ENCODE measurements at regions of chr1 and their contacts with region 1.

Region 1: GRCh38 chr1:151459331-151460046 is at the start of gene POGZ:
- DNase-seq: peak; percentile 92
- H3K4me3 ChIP-seq: peak within 1 kb of the TSS; percentile 70 to 91
- H3K27ac ChIP-seq: peak within 1 kb of the TSS; percentile 95 to 99
- H3K4me1 ChIP-seq: peaks cover 2% of the 10 kb centered on the region
- H3K27me3 ChIP-seq: no peaks in the 10 kb centered on the region
- CTCF ChIP-seq: no peak
- POLR2A ChIP-seq: no peak
- total RNA-seq, gene POGZ: 34.5 to 126 TPM

Region 2: GRCh38 chr1:151472856-151473731 is 13.6 kb after region 1 on chr1:
- intact Hi-C with region 1: loop called (anchors 2 kb)
- DNase-seq: peak; percentile 13
- H3K4me3 ChIP-seq: peak overlapping the region; percentile 49 to 62
- H3K27ac ChIP-seq: peak overlapping the region; percentile 58 to 74
- H3K4me1 ChIP-seq: no peaks in the 10 kb centered on the region
- H3K27me3 ChIP-seq: no peaks in the 10 kb centered on the region
- CTCF ChIP-seq: no peak
- POLR2A ChIP-seq: no peak

Region 3: DNA sequence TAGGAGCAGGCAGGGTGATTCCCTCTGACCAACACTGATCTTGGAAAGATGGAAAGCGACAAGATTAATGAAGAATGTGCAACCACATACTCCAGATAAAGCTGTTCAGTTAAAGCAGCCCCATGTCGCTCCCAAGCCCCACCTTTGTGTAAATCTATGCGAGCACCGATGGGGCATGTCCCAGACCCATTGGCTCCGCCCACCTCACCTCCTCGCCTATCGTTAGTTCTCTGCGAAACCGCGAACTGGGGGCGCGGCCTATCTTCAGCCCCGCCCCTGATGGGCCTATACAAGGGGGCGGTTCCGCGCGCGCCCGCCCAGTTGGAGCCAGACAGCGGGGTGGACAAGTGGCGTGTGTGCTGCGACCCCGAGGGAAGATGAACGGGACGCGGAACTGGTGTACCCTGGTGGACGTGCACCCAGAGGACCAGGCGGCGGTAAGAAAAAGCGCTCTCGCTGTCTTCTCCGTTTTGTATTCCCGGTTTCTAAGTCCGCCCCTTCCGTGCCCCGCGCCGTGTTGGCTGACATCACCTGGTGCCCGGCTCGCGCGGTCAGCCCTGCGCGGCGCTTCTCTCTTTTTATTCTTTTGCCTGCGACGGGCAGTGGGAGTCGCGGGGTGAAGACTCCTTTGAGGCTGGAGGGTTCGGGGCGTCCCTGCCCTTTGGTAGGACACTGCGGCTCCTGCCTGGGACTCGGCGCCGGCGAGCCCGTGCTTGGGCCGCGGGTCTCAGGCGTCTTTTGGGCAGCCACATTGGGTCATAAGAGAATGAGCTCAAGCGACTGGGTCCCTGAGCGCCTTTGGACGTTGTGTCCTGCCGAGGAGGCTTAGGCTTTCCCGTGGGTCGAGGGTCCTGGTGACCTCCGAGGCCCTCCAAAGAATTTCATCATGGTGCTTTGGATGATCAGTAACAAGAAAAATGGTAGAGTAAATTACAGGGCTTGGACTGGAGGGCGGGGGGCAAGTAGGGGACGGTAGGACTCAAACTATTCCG is 80.8 kb after region 1 on chr1 and contains the start of gene TUFT1:
- intact Hi-C with region 1: no loop called
- DNase-seq: peak; percentile 96
- H3K4me3 ChIP-seq: peak within 1 kb of the TSS; percentile 63 to 70
- H3K27ac ChIP-seq: peak within 1 kb of the TSS; percentile 96 to 97
- H3K4me1 ChIP-seq: peaks cover 15% of the 10 kb centered on the region
- H3K27me3 ChIP-seq: no peaks in the 10 kb centered on the region
- CTCF ChIP-seq: peak in 2 of 4 experiments; percentile 4 to 17
- POLR2A ChIP-seq: peak; percentile 98
- total RNA-seq, gene TUFT1: 15.2 to 29.0 TPM

Measured in prostate gland (tissue), 2 donors.